Heart right ventricle (tissue), 16 donors: ENCODE measurements at regions of chr2 and their contacts with region 1.

Region 1: DNA sequence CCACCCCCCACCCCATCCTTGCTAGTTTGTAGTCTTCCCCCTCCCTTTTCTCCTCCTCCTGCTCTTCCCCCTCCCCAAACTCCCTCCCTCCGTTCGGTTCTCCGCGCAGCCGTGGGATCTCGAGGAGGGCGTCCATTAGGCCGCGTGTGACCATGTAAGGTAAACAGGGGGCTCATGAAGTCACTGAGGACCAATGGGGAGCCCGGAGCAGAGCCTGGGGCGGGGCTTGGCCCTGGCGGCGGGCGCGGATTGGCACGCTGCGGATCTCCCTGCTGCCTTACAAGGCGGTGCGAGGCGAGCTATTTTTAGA is 246 bp upstream of the KLF7 start:
- DNase-seq: peak; percentile 99
- ATAC-seq: peak; percentile 92 to 96 (median 93)
- H3K4me3 ChIP-seq: peak overlapping the region; percentile 57 to 98 (median 82)
- H3K27ac ChIP-seq: peak overlapping the region; percentile 96 to 100 (median 100)
- H3K4me1 ChIP-seq: peaks cover 3 to 44% (median 40%) of the 10 kb centered on the region in 9 donors
- H3K27me3 ChIP-seq: no peaks in the 10 kb centered on the region
- CTCF ChIP-seq: no peak

Region 2: DNA sequence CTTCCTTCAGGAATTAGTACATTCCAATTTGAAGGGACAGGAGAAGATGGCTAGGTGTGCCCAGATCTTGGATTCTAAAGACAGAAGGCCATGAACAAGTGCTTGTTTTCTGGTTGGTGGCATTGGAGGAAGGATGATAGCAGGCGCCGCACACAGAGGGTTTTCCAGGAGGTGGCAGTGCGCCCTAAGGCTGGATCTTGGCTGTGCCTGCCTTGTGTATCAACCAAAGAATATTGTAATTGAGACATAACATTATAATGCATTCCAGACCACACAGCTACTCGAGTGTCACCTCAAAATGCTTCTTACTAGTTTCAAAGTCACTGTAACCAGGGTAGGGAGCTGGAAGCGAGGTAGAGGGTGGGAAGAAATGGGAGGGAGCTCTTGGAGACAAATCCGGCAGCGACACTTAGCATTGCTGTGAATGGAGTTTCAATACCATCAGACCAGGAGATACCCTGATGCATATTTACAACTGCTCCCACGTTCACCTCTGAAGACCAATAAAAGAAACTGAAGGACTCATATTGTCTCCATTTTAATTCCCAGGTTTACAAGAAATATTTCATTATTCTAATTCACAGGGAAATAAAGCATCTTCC is 184.2 kb before region 1 on chr2:
- intact Hi-C with region 1: loop called in 9 of 10 experiments (anchors 2 to 10 kb)
- DNase-seq: peak; percentile 76 to 79
- ATAC-seq: peak; percentile 88 to 97 (median 94)
- H3K4me3 ChIP-seq: no peak overlapping the region
- H3K27ac ChIP-seq: peak overlapping the region in 1 of 10 donors; percentile 10
- H3K4me1 ChIP-seq: peaks cover 3 to 35% (median 22%) of the 10 kb centered on the region in 9 donors
- H3K27me3 ChIP-seq: no peaks in the 10 kb centered on the region
- CTCF ChIP-seq: peak; percentile 82 to 94 (median 87)

Region 3: DNA sequence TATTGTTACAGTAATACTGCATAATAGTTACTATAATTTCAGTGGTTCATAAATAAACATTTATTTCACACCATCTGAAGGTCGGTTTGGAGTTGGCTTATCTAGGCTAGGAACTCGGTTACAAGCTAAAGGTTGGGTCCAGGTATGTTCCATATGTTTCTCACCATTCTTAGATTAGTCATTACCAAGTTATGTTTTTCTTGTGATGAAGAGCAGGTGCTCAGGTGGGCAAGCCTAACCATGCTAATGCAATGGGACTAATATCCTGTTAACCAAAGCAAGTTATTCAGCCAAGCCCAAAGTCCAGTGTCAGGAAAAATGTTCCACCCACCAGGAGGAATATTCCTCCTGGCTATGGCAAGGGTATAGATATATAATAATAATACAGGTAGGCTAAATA is 133.5 kb before region 1 on chr2:
- intact Hi-C with region 1: no loop called
- DNase-seq: no peak
- ATAC-seq: no peak
- H3K4me3 ChIP-seq: no peak overlapping the region
- H3K27ac ChIP-seq: no peak overlapping the region
- H3K4me1 ChIP-seq: no peaks in the 10 kb centered on the region
- H3K27me3 ChIP-seq: no peaks in the 10 kb centered on the region
- CTCF ChIP-seq: no peak

Region 4: GRCh38 chr2:207083361-207084110 is 82.5 kb before region 1 on chr2:
- intact Hi-C with region 1: loop called in 1 of 10 experiments (anchors 5 kb)
- DNase-seq: no peak
- ATAC-seq: peak in 1 of 8 donors; percentile 16
- H3K4me3 ChIP-seq: no peak overlapping the region
- H3K27ac ChIP-seq: peak overlapping the region in 8 of 10 donors; percentile 10 to 86 (median 46)
- H3K4me1 ChIP-seq: peaks cover 6 to 64% (median 47%) of the 10 kb centered on the region in 9 donors
- H3K27me3 ChIP-seq: no peaks in the 10 kb centered on the region
- CTCF ChIP-seq: no peak

Region 5: GRCh38 chr2:207143215-207144172 is 22.5 kb before region 1 on chr2:
- intact Hi-C with region 1: loop called in 1 of 10 experiments (anchors 1 kb)
- DNase-seq: peak; percentile 72 to 80
- ATAC-seq: peak; percentile 77 to 91 (median 87)
- H3K4me3 ChIP-seq: peak overlapping the region in 8 of 10 donors; percentile 6 to 44 (median 28)
- H3K27ac ChIP-seq: peak overlapping the region; percentile 69 to 94 (median 88)
- H3K4me1 ChIP-seq: peaks cover 29 to 100% (median 97%) of the 10 kb centered on the region in 9 donors
- H3K27me3 ChIP-seq: no peaks in the 10 kb centered on the region
- CTCF ChIP-seq: no peak

Region 6: DNA sequence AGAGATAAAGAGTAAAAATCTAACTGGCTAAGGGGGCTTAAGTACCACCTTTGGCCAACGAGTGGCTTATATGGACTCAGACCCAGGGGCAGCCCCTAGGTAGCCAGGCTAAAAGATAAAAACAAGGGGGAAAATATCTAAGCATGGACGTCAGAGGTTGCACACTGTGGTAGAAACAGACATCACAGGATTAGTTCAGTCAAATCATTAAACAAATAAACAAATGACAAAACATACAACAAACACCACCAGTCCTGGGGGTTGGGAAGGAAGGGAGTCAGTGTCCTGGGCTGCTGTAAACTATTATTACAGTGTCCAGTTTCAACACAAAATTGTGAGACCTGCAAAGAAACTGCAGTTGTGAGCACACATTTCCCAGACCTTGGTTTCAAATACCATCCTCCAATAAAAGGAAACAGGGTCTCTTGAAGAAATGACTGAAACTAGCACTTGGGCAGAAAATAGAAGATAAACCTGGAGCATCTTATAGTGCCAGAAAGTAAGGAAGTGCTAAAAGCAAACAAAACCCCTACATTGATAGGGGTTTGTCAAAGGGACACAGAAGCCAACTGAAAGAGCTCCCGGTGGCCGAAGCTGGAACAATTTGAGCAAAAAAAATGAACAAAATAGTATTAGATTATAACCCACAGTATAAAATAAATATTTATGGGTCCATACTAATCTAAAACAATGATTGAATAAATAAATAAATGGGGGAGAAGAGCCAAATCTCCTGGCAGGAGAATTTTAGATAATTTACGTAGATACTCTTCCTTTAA is 154.6 kb after region 1 on chr2:
- intact Hi-C with region 1: no loop called
- DNase-seq: no peak
- ATAC-seq: no peak
- H3K4me3 ChIP-seq: no peak overlapping the region
- H3K27ac ChIP-seq: no peak overlapping the region
- H3K4me1 ChIP-seq: no peaks in the 10 kb centered on the region
- H3K27me3 ChIP-seq: no peaks in the 10 kb centered on the region
- CTCF ChIP-seq: no peak

Region 7: DNA sequence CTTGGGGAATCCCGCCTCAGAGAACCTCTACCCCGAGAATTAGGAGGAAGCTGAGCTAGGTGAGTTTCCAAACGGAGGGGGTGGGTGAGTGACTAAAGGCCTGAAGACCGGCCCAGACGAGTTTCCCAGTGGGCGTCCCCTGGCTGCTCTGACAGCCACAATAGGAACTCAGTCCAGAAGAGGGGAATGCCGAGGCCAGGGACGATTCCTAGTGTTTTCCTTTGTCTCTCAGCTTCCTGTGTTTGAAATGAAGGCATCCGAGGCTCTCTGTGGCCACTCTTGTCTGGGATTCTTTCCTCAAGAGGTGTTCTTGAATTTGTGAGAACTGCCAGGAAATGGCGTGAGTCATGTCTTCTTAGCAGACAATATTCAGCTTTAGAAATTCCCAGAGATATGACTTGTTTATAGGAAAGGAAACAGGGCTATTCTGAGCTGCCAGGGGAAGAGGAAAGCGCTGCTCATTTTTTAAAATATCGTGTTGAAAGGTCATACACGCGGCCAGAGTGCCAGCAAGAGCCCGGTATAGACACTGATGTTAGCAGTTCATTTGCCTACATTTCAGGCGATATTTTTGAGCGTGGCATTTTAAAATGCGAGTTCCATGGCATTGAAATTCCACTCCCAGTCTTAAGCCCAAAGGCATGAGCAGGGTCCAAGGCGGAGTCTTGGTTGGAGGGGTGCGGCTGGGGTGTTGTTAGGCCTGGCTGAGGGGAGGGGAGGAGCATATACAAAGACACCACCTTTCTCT is 168.8 kb after region 1 on chr2:
- intact Hi-C with region 1: loop called in 8 of 10 experiments (anchors 2 to 10 kb)
- DNase-seq: peak; percentile 60 to 80
- ATAC-seq: peak; percentile 54 to 88 (median 85)
- H3K4me3 ChIP-seq: peak overlapping the region in 9 of 10 donors; percentile 2 to 41 (median 31)
- H3K27ac ChIP-seq: peak overlapping the region; percentile 60 to 96 (median 92)
- H3K4me1 ChIP-seq: peaks cover 0 to 82% (median 50%) of the 10 kb centered on the region in 9 donors
- H3K27me3 ChIP-seq: no peaks in the 10 kb centered on the region
- CTCF ChIP-seq: peak in 2 of 9 donors; percentile 8 to 14